Left ventricle myocardium superior (tissue), 1 donor: ENCODE measurements at regions of chr3 and their contacts with region 1.

Region 1: DNA sequence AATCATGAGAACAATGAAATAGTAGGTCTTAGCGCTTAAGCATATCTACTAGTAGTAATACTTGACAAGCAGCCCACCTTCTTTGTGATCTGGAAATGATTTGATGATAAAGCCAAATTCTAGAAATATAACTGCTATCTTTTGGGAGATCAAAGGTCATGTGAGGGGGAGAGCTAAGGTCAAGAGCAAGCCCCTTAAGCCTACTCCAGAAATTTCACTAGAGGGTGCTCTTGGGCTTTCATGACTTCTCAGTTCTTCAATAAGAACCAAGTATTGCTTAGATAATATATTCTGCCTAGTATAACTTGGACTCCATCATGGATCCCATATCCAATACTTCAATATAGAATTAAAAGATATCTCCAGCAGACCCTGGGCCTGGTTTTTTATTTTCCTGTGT is 319.6 kb downstream of the ZBTB20 start:
- DNase-seq: no peak
- ATAC-seq: peak; percentile 70

Region 2: GRCh38 chr3:114370537-114371174 is 456.8 kb before region 1 on chr3:
- intact Hi-C with region 1: loop called (anchors 10 kb)
- DNase-seq: no peak
- ATAC-seq: no peak

Region 3: GRCh38 chr3:115085197-115085865 is 257.8 kb after region 1 on chr3:
- intact Hi-C with region 1: loop called (anchors 10 kb)
- DNase-seq: no peak
- ATAC-seq: peak; percentile 75

Region 4: GRCh38 chr3:115169808-115170207 is 342.3 kb after region 1 on chr3:
- intact Hi-C with region 1: loop called (anchors 5 kb)
- DNase-seq: no peak
- ATAC-seq: no peak